ENCODE measurements at regions of chr1 and their contacts with region 1.

Region 1: GRCh38 chr1:115771847-115772457 is 3.4 kb upstream of the CASQ2 start:
- DNase-seq: peak; percentile 79

Region 2: DNA sequence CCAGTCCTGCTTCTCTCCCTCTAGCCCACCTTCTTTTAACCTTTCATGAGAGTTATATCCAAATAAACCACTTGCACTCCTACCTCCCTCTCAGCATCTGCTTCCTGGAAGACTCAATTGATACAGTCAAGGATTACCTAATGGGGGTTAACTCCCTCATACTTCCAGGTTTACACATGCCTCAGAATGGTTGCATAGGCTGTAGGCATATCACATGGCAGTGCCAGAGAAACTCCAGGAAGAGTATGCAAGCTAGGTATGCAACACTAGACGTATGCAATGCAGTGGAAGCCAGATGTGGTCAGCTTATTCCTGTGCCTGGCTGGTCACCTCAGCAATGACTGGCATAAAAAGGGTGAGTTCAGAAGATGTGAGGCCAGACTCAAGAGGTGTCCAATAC is 162.9 kb before region 1 on chr1:
- intact Hi-C with region 1: loop called (anchors 2 kb)
- DNase-seq: no peak

Region 3: GRCh38 chr1:115727706-115728249 is 44.2 kb before region 1 on chr1:
- intact Hi-C with region 1: loop called (anchors 5 kb)
- DNase-seq: no peak

Region 4: DNA sequence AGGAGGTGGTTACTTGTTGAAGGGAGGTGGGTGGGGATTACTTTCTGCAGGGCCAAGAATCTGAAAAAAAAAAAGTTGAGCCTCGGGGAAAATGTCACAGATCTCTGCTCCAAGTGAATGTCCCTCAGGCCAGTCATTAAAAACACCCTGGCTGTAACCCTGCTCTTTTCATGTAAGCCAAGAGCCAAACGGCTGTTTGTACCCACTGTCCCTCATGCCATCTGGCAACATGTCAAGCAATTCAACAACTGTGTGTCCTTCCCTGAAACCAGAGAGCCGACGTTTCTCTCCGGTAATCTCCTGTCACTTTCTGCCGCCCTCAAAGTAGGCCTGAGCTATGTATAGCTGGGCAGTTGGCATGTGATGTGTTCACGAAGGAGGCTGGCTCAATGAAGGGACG is 18.1 kb before region 1 on chr1:
- intact Hi-C with region 1: loop called (anchors 2 kb)
- DNase-seq: peak; percentile 83

Measured in cardiac septum (tissue), 1 donor.